HEK293 (cell line): ENCODE measurements at regions of chr6 and their contacts with region 1.

Region 1: DNA sequence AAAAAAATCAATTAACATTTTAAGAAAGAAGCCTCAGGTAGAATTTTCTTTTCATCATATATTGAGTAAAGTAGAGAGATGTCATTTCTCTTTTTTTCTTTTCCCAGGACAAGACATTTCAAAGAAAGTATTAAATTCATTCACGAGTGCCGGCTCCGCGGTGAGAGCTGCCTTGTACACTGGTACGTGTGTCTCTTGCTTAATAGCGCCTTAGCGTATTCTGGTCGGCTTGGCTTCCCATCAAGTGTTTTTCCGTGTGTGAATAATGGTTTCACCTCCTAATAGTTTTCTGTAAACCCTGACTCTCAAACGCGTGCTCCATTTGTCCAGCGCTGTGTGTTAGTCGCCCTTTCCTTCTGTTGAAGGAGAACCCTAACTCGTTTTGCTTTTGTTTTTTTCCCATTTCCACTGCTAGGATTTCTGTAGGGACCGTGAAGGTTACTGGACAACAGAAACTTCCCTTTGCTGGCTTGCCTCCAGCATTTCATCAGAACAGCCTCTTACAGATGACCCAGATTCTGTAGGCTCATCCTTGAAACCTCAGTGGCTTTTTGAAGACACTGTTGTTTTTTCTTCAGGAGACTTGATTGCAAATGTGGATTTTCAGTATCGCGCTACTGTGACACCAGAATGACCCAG is 45.7 kb upstream of the IRF4 start:
- H3K4me3 ChIP-seq: no peak overlapping the region
- H3K27ac ChIP-seq: no peak overlapping the region
- H3K4me1 ChIP-seq: no peaks in the 10 kb centered on the region
- CTCF ChIP-seq: no peak

Region 2: DNA sequence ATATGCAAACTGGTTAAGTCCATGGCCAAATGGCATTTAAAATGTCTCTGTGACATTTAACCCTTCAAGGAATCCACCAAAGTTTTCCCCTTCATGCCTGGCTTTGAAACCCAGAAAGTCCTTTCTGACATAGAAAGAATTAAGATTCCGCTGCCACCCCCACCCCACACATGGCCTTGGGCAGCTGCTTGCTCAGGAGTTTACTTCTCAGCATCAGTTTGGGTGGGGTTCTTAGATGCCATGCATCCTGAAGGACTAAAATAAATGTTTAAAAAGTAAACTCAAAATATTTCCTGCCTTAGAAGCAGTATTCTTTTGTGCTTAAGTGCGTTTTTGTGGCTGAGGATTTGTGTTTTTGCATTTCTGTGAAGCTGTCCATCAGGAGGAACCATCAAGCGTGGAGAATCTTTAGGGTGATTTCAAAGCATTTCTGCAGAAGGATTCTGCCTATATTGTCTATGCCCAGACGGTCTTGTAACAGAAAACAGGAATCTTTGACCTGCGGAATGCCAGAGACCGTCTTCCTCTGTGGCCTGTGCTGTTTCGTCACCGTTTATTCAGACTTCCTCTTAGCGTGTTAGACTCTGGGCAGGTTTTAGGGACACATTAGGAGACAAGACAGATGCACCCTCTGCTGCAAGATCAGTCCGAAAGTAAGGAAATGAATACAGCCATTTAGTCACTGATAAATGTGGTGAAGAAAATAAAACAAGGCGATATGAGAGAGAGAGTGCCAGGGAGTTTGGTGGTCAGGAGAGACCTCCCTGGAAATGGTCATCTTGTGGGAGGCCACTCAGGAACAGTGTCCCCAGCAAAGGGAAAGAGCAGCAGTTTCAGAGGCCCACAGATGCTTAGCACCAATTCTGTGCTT is 47.4 kb before region 1 on chr6:
- CTCF ChIA-PET with region 1: no interaction called
- POLR2A ChIA-PET with region 1: interaction called, 11 read pairs
- H3K4me3 ChIP-seq: no peak overlapping the region
- H3K27ac ChIP-seq: no peak overlapping the region
- H3K4me1 ChIP-seq: peaks cover 13% of the 10 kb centered on the region
- CTCF ChIP-seq: no peak

Region 3: DNA sequence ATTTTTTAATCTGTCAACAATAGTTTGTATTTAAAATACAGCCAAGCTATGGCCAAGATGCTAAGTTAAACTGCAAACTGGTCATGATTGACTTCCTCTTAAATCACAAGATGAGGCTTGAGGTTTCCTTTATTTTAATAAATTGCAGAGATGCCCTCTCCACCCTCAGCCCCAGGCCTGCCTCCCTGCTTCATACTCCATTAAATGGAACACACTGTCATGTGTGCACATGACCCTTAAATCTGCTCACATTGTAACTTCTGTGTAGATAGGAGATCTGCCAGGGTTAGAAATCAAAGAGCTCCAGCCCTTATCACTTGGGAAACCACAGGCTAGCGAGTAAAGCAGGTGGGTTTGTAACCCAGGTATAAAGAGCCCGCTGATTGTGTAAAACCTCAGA is 32.8 kb before region 1 on chr6:
- CTCF ChIA-PET with region 1: no interaction called
- POLR2A ChIA-PET with region 1: no interaction called
- H3K4me3 ChIP-seq: no peak overlapping the region
- H3K27ac ChIP-seq: no peak overlapping the region
- H3K4me1 ChIP-seq: peaks cover 3% of the 10 kb centered on the region
- CTCF ChIP-seq: no peak

Region 4: DNA sequence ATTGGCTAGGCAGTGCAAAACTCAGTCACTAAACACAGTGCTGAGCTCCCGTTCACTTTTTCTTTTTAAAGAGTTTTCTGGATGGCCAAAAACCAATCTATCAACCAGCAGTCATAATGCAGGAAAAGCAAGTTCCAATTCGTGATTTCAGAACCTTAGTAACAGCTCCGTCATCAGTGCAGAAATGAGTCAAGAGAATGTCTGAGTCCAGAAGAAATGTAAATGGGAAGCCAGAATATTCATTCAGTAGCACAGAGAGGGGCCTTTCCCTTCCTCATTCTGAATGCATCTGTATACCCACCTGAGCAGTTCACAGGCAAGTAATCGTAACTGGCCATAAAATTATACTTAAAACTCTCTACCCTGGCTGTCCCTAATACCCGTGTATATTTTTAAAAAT is 290.6 kb after region 1 on chr6:
- CTCF ChIA-PET with region 1: no interaction called
- POLR2A ChIA-PET with region 1: no interaction called
- H3K4me3 ChIP-seq: no peak overlapping the region
- H3K27ac ChIP-seq: no peak overlapping the region
- H3K4me1 ChIP-seq: no peaks in the 10 kb centered on the region
- CTCF ChIP-seq: no peak

Region 5: DNA sequence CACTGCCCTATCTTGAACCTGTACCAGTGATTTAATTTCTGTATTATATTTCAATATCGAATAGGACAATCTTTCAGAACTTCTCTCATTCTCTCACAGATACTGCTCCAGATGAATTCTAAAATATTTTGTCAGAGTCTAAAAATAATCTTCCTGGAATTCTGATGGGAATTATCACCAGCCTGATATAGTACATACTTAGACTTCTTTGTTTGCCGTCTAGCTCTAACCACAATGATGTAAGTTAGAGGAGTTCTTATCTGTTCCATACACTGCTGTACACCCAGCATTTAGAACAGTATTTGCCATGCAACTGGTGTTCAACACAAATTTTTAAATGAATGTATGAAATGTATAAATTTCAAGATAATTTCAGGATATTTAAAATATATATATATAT is 312.4 kb after region 1 on chr6:
- CTCF ChIA-PET with region 1: no interaction called
- POLR2A ChIA-PET with region 1: no interaction called
- H3K4me3 ChIP-seq: no peak overlapping the region
- H3K27ac ChIP-seq: no peak overlapping the region
- H3K4me1 ChIP-seq: peaks cover 20% of the 10 kb centered on the region
- CTCF ChIP-seq: no peak